ENCODE measurements at regions of chr5 and their contacts with region 1.

Region 1: DNA sequence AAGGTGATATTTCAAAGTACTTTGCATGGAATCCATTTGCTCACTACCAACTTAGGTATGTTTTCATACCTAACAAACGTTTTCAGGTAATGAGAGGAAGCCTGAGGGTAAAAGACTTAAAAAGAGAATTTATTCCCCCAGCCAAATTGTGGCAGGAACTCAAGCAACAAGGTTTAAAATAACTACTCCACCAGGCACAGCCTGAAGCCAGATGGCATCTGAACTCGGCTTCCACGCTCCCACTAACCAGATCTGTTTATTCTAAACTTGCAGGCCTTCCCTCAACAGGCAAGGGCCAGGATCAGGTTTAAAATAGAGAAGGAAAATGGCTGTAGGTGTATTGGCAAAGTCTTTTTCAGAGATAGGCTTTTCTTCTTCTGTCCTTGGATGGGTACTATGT is 89.4 kb downstream of the OTULIN start:
- DNase-seq: no peak
- ATAC-seq: no peak

Region 2: DNA sequence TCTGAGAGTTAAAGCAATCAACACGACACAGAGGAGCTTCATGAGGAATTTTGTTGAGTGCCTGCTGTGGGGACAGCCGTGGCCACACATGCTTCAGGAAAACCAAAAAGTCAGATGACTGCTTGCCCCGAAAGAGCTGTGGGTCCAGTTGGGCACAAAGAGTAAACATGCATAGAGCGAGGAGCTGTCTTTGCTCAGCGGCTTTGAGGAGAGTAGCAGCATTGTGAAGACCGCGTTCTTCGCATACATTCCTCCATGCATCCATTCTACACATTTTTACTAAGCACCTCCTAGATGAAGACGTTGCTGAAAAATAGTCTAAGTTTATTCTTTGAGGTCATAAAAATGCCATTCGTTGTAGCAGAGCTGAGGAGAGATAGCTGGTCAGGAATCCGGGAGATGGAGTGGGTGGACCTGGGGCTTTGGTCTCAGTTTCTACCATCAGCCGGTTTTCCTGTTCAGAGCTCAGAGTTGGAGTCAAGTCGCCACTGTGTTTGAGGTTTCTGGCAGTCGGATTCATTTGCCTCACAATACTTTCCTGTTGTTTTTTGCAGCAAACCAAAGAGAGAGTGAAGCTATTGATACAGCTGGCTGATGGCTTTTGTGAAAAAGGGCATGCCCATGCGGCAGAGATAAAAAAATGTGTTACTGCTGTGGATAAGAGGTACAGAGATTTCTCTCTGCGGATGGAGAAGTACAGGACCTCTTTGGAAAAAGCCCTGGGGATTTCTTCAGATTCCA is 366.9 kb before region 1 on chr5:
- intact Hi-C with region 1: no loop called
- DNase-seq: no peak
- ATAC-seq: peak; percentile 75

Region 3: DNA sequence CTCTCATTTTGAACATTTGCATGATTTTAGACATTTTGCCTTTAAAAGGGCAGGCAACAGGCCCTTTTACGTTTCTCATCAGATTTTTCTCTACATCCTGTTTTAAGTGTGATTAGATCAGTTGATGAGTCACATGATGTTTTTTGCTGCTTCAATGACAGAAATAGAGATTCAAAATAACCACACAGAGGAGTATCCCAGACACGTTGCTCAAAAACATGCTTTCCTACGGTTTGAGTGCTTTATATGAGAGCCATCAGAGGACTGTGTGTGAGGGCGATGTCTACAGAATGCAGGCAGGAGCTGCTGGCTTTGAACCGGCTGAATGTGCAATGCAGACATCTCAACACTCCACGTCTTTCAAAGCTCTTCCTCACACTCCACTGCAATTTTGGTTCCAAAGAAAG is 47.3 kb before region 1 on chr5:
- intact Hi-C with region 1: no loop called
- DNase-seq: no peak
- ATAC-seq: peak; percentile 56

Region 4: DNA sequence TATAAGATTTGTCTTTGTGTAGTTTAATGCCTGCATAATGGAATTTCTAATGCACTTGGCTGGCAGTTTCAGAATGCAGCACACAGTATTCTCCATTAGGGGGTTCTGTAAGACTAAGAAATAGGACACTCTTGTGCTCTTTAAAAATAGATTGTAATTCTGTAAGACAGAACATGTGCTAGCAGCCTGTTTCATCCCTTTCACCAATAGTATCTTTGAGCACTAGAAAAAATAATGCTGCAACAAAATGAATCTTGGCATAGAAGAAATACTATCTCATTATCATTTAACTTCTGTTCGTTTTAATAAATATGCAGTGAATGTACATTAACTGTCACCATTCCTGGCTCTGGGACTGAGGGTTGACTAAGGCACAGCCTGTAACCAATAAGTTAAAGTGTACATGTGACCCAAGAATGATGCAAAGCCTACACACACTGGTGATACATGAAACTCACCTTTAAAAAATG is 1735.4 kb after region 1 on chr5:
- intact Hi-C with region 1: loop called (anchors 10 kb)
- DNase-seq: no peak
- ATAC-seq: peak; percentile 93

Measured in sciatic nerve (tissue), 2 donors.